Common myeloid progenitor, CD34-positive (primary cell): ENCODE measurements at regions of chr12 and their contacts with region 1.

Region 1: GRCh38 chr12:3885277-3886094 is 12.3 kb upstream of the PARP11 start:
- DNase-seq: peak; percentile 65 to 81 (median 76)
- H3K4me3 ChIP-seq: peak overlapping the region in 3 of 7 experiments; percentile 38 to 71 (median 45)
- H3K27ac ChIP-seq: no peak overlapping the region
- H3K4me1 ChIP-seq: peaks cover 0 to 27% (median 13%) of the 10 kb centered on the region in 4 experiments
- H3K27me3 ChIP-seq: no peaks in the 10 kb centered on the region

Region 2: GRCh38 chr12:3698218-3698974 is 187.1 kb before region 1 on chr12:
- CTCF ChIA-PET with region 1: no interaction called
- POLR2A ChIA-PET with region 1: no interaction called
- DNase-seq: no peak
- H3K4me3 ChIP-seq: no peak overlapping the region
- H3K27ac ChIP-seq: no peak overlapping the region
- H3K4me1 ChIP-seq: no peaks in the 10 kb centered on the region
- H3K27me3 ChIP-seq: no peaks in the 10 kb centered on the region

Region 3: DNA sequence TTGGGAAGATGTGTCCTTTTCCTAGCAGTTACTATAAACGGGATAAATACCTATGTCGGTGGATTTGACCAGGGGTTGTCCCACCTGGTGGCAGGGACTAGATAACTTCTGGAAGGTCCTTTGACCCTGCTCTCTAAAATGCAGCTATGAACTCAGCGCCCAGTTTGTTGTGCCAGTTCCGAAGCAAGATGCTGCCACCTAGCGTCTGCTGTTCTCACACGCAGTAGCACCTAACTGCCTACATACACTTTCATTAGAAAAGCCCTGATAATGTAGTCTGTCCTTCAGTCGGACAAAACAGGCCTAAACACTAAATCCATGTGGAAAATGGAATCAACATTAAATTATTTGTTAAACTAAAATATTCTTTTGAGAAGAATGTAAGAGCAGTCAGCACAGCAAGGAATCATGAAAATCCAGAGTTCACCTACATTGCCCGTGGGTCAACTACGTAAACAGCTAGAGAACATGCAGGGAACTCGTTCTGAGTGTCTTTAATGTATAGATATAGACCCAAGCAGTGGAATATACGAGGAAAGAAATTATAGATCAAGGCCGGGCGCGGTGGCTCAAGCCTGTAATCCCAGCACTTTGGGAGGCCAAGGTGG is 81.5 kb before region 1 on chr12:
- CTCF ChIA-PET with region 1: no interaction called
- POLR2A ChIA-PET with region 1: no interaction called
- DNase-seq: peak; percentile 69 to 79 (median 71)
- H3K4me3 ChIP-seq: no peak overlapping the region
- H3K27ac ChIP-seq: no peak overlapping the region
- H3K4me1 ChIP-seq: no peaks in the 10 kb centered on the region
- H3K27me3 ChIP-seq: no peaks in the 10 kb centered on the region

Region 4: DNA sequence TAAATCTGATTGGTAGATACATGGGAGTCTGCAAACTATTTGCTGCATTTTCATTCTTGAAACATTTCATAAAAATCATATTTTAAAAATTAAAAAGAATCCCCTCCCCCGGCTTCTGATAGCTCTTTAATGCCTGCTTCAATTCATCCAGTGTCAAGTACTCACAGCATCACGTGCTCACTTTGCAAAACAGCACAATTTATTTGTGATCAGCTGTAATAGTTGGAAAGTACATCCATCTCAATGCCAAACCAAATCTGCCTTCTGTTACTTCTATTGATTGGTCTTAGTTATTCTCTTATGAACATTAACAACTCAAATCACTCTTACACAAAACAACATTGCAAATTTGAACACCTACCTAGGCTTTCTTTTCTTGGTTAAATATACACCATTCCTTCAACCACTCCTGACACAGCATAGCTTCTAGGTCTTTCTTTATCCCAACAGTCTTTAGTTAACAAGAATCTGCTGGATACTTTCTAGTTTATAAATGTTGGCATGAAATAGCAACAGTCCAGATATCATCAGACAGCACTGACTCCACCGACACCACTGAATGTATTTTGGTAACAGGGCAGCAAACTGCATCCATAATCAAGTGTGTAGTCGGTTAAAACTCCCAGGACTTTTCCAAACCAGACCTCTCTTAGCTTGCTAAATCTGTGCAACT is 70.3 kb before region 1 on chr12:
- CTCF ChIA-PET with region 1: no interaction called
- POLR2A ChIA-PET with region 1: no interaction called
- DNase-seq: no peak
- H3K4me3 ChIP-seq: no peak overlapping the region
- H3K27ac ChIP-seq: no peak overlapping the region
- H3K4me1 ChIP-seq: peaks cover 0 to 9% (median 2%) of the 10 kb centered on the region in 4 experiments
- H3K27me3 ChIP-seq: no peaks in the 10 kb centered on the region

Region 5: GRCh38 chr12:3872800-3873636 is 12.5 kb before region 1 on chr12 and contains the start of gene PARP11:
- CTCF ChIA-PET with region 1: interaction called, 27 read pairs
- POLR2A ChIA-PET with region 1: no interaction called
- DNase-seq: peak; percentile 98 to 99 (median 98)
- H3K4me3 ChIP-seq: peak within 1 kb of the TSS; percentile 56 to 97 (median 84)
- H3K27ac ChIP-seq: peak within 1 kb of the TSS; percentile 90 to 93
- H3K4me1 ChIP-seq: peaks cover 26 to 47% (median 35%) of the 10 kb centered on the region in 4 experiments
- H3K27me3 ChIP-seq: no peaks in the 10 kb centered on the region

Region 6: DNA sequence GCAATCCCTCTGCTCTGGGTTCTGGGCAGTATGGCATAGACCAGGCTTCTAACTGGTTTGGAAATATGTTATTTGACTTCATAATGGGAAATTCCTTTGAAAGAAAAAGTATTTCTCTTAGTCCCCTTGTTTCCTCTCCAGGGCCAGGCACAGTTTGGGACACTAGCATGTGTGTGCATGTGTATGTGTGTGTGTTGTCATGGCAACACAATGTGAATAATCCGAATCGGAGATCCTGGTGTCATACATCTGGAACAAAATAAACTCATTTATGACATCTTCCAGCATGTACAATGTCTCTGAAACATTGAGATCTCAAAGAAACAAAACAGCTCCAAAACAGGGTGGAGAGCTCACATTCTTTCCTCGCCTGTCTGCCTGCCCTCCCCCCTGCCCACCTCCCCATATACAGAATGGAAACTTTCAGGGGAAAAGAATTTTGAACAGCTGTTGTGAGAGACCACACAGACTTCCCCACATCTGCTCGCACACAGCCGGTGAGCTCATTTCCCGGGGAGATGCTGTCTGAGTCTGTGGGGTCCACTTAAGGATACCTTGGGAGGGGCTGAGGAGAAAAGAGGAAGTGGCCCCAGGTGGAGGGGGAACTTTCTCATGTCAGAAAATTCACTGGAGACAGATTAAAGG is 43.2 kb after region 1 on chr12:
- CTCF ChIA-PET with region 1: interaction called, 19 read pairs
- POLR2A ChIA-PET with region 1: interaction called, 3 read pairs
- DNase-seq: peak; percentile 90 to 99 (median 98)
- H3K4me3 ChIP-seq: peak overlapping the region in 3 of 7 experiments; percentile 16 to 38 (median 37)
- H3K27ac ChIP-seq: peak overlapping the region; percentile 78 to 86
- H3K4me1 ChIP-seq: peaks cover 20 to 64% (median 60%) of the 10 kb centered on the region in 4 experiments
- H3K27me3 ChIP-seq: no peaks in the 10 kb centered on the region

Region 7: DNA sequence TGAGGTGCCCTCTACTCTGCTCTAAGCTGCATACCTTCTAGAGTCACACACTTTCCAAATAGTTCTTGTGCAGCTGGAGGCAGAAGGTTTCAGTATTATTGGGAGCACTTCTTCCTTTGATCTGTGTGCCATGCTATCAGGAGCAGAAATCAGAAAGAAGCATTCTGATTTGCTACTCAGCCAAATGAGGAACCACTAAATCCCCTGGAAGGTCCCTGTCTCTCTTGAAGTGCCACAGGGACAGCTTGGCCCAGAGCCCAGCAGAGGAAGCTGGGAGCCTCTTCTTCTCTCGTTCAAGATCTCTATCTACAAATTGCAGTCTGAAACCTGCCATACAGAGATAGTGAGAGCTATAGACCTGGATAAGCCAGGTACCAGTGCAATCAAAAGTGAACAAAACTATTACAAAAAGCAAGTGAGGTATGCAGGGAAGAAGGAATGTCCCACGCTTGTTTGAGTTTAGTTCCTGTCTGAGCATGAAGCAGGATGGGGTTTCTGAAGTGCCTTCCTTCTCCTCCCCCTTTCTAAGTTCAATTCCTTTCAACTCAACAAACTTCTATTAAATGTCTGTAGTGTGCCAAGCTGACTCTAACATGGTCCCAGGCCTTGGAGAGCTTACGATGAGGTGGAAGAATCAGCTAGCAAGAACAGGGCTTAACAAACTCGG is 88.6 kb after region 1 on chr12:
- CTCF ChIA-PET with region 1: interaction called, 11 read pairs
- POLR2A ChIA-PET with region 1: no interaction called
- DNase-seq: peak in 2 of 3 donors; percentile 59 to 61
- H3K4me3 ChIP-seq: peak overlapping the region in 3 of 7 experiments; percentile 9 to 34 (median 26)
- H3K27ac ChIP-seq: no peak overlapping the region
- H3K4me1 ChIP-seq: peaks cover 2 to 20% (median 16%) of the 10 kb centered on the region in 4 experiments
- H3K27me3 ChIP-seq: no peaks in the 10 kb centered on the region

Region 8: GRCh38 chr12:4006743-4007142 is 121.3 kb after region 1 on chr12:
- CTCF ChIA-PET with region 1: interaction called, 212 read pairs
- POLR2A ChIA-PET with region 1: no interaction called
- DNase-seq: no peak
- H3K4me3 ChIP-seq: no peak overlapping the region
- H3K27ac ChIP-seq: no peak overlapping the region
- H3K4me1 ChIP-seq: peaks cover 0 to 7% (median 2%) of the 10 kb centered on the region in 4 experiments
- H3K27me3 ChIP-seq: no peaks in the 10 kb centered on the region

Region 9: DNA sequence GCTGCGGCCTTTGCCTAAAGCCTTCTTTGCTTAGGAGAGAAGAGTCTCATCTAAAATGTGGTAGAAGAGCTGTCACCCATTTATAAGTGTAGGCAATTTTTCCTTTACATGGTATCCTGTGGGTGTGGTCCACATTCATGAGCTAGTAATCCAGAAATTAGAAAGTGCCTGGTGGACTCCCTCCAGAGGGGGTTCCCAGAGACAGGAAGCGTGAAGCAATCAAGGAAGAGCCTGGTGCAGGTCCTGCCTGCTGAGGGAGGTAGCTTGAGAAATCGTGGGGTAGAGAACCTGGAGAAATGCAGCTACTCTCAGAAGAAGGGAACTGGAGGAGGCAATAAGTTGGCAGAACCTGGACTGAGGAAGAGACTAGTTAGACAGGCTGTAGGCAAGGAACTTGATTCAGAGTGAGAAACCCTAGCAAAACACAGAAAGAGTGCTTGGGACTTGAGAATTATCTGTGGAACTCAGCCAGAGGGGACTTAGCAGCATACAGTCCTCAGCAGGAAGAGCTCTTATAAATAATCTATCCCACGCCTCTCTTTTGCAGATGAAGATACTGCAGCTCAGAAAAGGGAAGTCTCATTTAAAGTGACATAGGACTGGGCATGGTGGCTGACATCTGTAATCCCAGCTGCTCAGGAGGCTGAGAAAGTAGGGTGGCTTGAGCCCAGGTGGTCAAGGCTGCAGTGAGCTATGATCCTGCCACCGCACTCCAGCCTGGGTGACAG is 205.7 kb after region 1 on chr12:
- CTCF ChIA-PET with region 1: interaction called, 12 read pairs
- POLR2A ChIA-PET with region 1: interaction called, 4 read pairs
- DNase-seq: peak in 2 of 3 donors; percentile 66 to 77
- H3K4me3 ChIP-seq: peak overlapping the region in 1 of 7 experiments; percentile 8
- H3K27ac ChIP-seq: no peak overlapping the region
- H3K4me1 ChIP-seq: peaks cover 2 to 16% (median 14%) of the 10 kb centered on the region in 4 experiments
- H3K27me3 ChIP-seq: no peaks in the 10 kb centered on the region

Region 10: DNA sequence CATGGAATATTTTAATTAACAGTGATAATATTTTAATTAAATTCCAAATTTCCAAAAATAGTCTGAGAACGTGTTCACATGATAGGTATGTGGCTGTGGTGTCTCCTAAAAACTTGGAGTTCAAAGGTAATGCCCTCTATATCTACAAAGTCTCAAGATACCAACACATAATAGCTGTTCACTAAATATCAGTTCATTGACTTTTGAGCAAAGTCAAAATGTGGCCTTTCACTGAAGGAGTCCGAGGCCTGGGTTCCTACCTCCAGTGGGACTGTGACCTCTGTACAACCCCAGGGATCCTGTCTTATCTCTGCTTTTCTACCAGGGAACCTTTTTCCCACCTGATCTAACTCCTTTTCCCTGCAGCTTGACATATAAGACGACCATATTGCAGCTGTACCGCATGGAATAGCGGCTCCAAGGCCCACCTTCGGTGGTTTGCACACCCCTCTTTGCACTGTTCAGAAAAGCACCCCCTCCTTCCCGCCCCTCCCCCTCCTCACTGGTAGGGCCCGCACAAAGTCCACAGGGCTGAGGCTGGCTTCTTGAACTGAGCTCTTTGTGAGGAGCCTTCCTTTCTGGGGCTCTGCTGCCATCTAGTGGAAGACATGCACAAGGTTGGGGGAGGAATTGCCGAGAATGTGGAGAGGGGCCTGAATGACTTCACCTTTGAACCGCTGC is 391.2 kb after region 1 on chr12:
- CTCF ChIA-PET with region 1: interaction called, 125 read pairs
- POLR2A ChIA-PET with region 1: interaction called, 3 read pairs
- DNase-seq: peak; percentile 92 to 95 (median 94)
- H3K4me3 ChIP-seq: peak overlapping the region in 3 of 7 experiments; percentile 92 to 98 (median 94)
- H3K27ac ChIP-seq: no peak overlapping the region
- H3K4me1 ChIP-seq: peaks cover 6 to 66% (median 48%) of the 10 kb centered on the region in 4 experiments
- H3K27me3 ChIP-seq: no peaks in the 10 kb centered on the region